Left cardiac atrium (tissue), 4 donors: ENCODE measurements at regions of chr9 and their contacts with region 1.

Region 1: GRCh38 chr9:69131682-69132081 is 42.4 kb upstream of the TJP2 start:
- DNase-seq: no peak
- ATAC-seq: peak; percentile 76 to 93

Region 2: GRCh38 chr9:69097064-69097463 is 34.6 kb before region 1 on chr9:
- intact Hi-C with region 1: no loop called
- DNase-seq: no peak
- ATAC-seq: no peak

Region 3: DNA sequence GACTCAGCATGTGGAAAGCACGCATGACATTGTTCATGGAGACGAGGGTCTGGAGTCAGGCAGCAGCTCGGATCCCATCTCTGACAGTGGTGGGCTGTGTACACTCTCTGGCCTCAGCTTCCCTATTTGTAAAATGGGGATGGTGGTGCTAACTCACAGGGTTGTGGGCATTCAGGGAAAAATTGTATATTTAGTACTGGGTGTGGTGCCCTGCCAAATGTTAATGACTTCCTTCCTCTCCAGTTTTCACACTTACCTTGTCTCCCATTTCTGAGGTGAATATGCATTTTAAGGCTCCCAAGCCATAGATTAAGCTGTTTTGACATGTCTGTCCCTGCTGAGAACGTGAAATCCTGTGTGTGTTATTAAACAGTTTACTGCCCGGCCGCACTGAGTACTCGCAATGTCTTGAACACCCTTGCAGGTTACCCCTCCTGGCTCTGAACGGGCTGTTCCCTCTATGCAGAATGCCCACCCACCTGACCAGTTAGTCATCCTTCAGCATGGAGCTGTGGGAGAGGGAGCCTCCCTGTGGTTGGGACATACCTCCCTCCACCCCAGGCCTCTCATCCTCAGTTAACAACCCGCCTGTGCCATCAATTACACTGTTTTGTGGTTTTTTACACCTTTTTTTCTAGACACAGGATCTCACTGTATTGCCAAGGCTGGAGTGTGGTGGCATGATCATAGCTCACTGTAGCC is 68.2 kb after region 1 on chr9:
- intact Hi-C with region 1: loop called in 1 of 2 experiments (anchors 10 kb)
- DNase-seq: peak; percentile 45
- ATAC-seq: peak; percentile 38 to 68